Esophagus squamous epithelium (tissue), 5 donors: ENCODE measurements at regions of chr18 and their contacts with region 1.

Region 1: DNA sequence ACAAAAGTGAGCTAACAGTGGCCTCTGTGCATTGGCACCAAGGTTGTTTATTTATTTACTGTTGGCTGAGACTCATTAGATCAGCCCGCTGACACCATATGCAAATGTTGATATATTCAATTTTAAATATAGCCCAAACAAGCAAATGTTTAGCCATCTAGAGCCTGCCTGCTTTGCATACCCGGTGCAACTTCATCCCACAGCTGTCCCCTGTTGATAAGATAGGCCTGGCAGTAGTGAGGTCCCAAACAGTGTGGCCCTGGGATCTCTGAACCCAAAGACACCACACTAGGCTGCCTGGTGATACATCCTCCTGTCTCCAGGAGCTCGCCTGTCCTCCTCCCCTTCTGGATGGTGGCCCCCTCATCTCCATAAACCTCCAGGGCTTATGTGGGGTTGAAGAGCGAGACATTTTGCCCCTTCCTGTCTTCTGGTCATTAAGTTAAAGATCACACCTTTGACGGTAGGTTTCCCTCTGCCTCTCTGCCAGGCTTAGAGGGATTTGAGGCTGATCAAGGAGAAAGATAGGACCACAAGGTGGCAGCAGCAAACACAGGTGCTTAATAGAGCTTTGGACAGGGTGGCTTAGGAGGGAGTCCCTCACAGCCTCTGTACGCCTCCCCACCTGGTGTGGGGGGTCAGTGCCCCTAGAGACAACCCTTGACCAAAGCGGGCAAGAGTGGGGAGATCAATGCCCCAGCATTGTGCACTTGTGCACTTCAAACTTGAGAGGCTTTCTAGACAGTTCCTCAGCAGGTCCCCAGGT is 23.7 kb upstream of the MYO5B start:
- DNase-seq: no peak
- H3K4me3 ChIP-seq: no peak overlapping the region
- H3K27ac ChIP-seq: no peak overlapping the region
- H3K4me1 ChIP-seq: no peaks in the 10 kb centered on the region
- H3K27me3 ChIP-seq: peaks cover 0 to 16% (median 0%) of the 10 kb centered on the region in 4 donors
- CTCF ChIP-seq: peak in 5 of 6 experiments; percentile 14 to 58 (median 39)
- POLR2A ChIP-seq: no peak

Region 2: GRCh38 chr18:49976795-49977560 is 241.6 kb before region 1 on chr18:
- intact Hi-C with region 1: no loop called
- DNase-seq: no peak
- H3K4me3 ChIP-seq: no peak overlapping the region
- H3K27ac ChIP-seq: no peak overlapping the region
- H3K4me1 ChIP-seq: peaks cover 0 to 7% (median 0%) of the 10 kb centered on the region in 3 donors
- H3K27me3 ChIP-seq: no peaks in the 10 kb centered on the region
- CTCF ChIP-seq: no peak
- POLR2A ChIP-seq: no peak

Region 3: GRCh38 chr18:50287441-50288347 is 69.1 kb after region 1 on chr18 and contains the start of gene CXXC1:
- intact Hi-C with region 1: no loop called
- DNase-seq: peak; percentile 99
- H3K4me3 ChIP-seq: peak within 1 kb of the TSS; percentile 80 to 89 (median 85)
- H3K27ac ChIP-seq: peak within 1 kb of the TSS; percentile 85 to 93 (median 90)
- H3K4me1 ChIP-seq: peaks cover 5 to 44% (median 17%) of the 10 kb centered on the region in 3 donors
- H3K27me3 ChIP-seq: no peaks in the 10 kb centered on the region
- CTCF ChIP-seq: peak in 5 of 6 experiments; percentile 40 to 79 (median 69)
- POLR2A ChIP-seq: peak in 2 of 4 donors; percentile 30 to 56
- total RNA-seq, gene CXXC1: 42.0 to 58.9 (median 53.9) TPM

Region 4: DNA sequence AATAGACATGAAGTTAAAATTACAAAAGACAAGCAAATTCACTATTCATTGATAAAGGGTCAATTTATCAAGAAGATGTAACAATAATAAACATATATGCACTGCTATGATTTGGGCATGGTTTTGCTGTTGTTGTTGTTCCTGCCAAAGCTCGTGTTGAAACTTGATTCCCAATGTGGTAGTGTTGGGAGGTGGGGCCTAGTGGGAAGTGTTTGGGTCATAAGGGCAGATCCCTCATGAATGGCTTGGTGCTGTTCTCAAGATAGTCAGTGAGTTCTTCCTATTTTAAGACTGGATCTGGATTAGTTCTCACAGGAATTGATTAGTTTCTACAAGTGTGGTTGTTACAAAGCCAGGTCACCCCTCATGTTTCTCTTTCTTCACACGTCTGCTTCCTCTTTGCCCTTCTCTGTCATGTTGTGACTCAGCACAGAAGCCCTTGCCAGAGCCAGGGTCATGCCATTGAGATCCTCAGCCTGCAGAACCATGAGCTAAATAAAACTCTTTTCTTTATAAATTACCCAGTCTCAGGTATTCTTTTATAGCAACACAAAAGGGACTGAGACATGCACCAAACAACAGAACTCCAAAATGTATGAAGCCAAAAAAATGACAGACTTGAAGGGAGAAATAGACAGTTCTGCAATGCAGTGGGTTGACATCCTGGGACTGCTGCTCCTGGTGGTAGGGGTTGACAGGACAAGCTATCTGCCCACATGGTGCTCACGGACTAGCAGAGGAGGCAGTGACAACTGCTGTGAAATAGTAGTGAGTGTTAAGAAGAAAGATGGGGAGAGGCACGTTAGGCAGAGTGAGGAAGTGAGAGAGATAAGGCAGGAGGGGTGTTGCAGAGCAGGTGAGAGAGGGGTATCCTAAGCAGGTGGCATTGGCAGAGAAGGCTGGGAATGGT is 137.7 kb after region 1 on chr18:
- intact Hi-C with region 1: loop called (anchors 10 kb)
- DNase-seq: no peak
- H3K4me3 ChIP-seq: no peak overlapping the region
- H3K27ac ChIP-seq: no peak overlapping the region
- H3K4me1 ChIP-seq: peaks cover 0 to 10% (median 0%) of the 10 kb centered on the region in 3 donors
- H3K27me3 ChIP-seq: peaks cover 0 to 39% (median 0%) of the 10 kb centered on the region in 4 donors
- CTCF ChIP-seq: peak in 1 of 6 experiments; percentile 35
- POLR2A ChIP-seq: no peak